ENCODE measurements at regions of chr3 and their contacts with region 1.

Region 1: DNA sequence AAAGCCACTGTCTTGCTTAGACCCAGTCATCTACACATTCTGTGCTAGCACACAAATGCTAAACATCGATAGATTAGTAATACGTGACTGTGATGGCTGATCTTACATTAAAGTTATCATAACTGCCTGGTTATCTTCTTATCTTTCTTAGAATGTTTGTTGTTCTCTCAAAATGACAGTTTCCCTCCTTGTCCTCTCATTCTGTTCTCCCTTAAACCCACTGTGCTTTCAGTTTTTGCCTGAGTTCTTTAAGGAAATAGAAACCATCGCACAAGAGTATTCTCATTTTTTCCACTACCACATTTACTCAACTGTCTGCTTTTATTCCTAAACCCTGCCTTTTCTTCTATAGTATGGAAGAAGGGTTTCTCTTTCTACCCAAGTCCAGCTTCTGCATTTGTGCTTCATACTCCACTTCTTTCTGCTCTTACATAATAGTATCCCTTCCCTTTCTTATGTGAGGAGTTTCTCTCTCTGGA is 17.1 kb downstream of the STX19 start:
- DNase-seq: no peak
- H3K4me3 Mint-ChIP-seq: no peak overlapping the region
- H3K27ac Mint-ChIP-seq: peak overlapping the region; percentile 36
- H3K4me1 Mint-ChIP-seq: peaks cover 35% of the 10 kb centered on the region
- H3K27me3 Mint-ChIP-seq: no peaks in the 10 kb centered on the region

Region 2: DNA sequence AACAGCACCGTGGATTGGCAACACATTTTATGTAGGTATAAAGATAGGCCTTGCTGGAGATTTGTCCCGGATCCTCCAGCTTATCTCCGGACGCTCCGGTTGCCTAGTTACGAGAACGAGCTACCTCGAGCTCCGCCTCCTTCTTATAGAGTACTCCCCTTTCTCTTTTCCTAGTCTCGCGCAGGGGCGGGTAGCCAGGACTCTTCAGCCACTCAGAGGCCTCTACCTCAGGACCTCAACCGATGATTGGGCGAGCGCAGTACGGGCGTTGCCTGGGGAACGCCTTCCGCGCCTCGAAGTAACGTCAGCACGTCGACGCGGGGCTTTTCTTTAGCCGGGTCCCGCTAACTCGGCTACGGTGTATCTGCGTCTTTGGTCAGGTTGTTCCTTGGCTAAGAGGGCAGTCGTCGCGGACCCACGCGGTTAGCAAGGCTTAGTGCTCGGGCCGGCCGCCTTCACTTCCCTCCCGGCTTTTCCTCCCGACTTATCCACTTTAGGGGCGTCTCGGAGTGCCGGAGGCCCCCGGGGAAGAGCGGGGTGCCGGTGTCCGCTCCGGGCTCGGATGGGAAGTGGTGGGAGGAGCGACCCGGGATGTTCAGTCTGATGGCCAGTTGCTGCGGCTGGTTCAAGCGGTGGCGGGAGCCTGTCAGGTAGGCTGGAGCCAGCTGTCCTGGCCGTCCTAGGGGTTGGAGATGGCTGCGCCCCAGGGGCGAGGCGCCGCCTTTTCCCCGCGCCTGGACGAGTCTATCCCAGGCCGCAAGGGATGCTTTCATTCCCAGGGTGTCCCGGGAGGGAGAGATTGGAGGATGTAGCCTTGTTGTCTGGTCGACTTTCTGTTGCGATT is 31.2 kb before region 1 on chr3 and contains the start of gene ARL13B:
- CTCF ChIA-PET with region 1: interaction called, 3 read pairs
- intact Hi-C with region 1: loop called (anchors 1 kb)
- DNase-seq: peak; percentile 96
- H3K4me3 Mint-ChIP-seq: peak within 1 kb of the TSS; percentile 81
- H3K27ac Mint-ChIP-seq: no peak within 1 kb of the TSS
- H3K4me1 Mint-ChIP-seq: peaks cover 12% of the 10 kb centered on the region
- H3K27me3 Mint-ChIP-seq: no peaks in the 10 kb centered on the region
- total RNA-seq, gene ARL13B: 8.0 to 8.3 TPM

Region 3: GRCh38 chr3:94036909-94037507 is 25.7 kb after region 1 on chr3:
- CTCF ChIA-PET with region 1: interaction called, 4 read pairs
- intact Hi-C with region 1: loop called (anchors 2 kb)
- DNase-seq: no peak
- H3K4me3 Mint-ChIP-seq: no peak overlapping the region
- H3K27ac Mint-ChIP-seq: no peak overlapping the region
- H3K4me1 Mint-ChIP-seq: no peaks in the 10 kb centered on the region
- H3K27me3 Mint-ChIP-seq: no peaks in the 10 kb centered on the region

Region 4: DNA sequence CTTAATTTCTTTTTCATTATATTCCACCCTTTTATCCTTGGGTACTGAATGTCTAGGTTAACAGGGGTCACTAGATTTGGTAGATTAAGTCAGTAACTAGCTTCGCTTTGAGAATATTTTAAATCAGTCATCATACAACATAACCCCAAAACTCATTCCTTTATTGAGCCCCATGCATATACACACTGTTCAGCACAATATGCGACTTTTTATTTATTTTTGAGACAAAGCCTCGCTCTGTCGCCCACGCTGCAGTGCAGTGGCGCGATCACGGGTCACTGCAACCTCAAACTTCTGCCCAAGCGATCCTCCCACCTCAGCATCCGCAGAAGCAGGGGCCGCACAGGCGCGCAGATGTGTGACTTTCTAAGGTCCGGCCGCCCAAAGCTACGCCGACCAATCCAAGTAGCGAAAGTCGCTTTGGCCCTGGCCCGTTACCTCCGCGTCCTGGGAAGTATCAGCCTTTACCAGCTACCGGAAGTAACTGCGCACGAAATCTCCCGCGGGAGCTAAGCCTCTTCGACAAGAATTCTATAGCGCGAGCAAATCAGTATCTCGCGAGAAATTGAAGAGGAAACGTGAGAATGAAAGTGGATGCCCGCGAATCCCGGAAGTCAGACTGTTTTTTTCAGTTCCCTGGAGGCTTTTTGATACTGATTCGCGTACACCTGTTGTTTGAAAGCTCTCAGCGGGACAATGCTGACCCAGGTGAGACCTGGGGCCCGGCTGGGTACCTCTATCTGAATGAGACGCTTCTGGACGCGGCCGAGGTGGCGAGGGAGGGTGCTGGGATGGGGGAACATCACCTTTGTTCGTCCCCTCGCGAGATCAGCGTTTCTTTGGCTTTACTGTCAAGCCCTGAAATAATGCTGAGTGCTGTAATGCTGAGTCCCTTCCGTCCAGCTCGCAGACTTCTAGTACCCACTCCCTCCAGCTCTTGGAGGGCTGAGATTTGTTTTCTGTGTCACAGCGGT is 51.4 kb after region 1 on chr3 and contains the starts of genes DHFR2 and NSUN3:
- CTCF ChIA-PET with region 1: interaction called, 6 read pairs
- intact Hi-C with region 1: loop called (anchors 1 kb)
- DNase-seq: peak; percentile 88
- H3K4me3 Mint-ChIP-seq: peak within 1 kb of the TSS; percentile 95
- H3K27ac Mint-ChIP-seq: peak within 1 kb of the TSS; percentile 99
- H3K4me1 Mint-ChIP-seq: peaks cover 59% of the 10 kb centered on the region
- H3K27me3 Mint-ChIP-seq: no peaks in the 10 kb centered on the region
- total RNA-seq, gene DHFR2: 4.5 to 5.3 TPM
- total RNA-seq, gene NSUN3: 10.9 to 15.8 TPM

Region 5: GRCh38 chr3:94069194-94069813 is 58.0 kb after region 1 on chr3:
- CTCF ChIA-PET with region 1: interaction called, 12 read pairs
- intact Hi-C with region 1: loop called (anchors 1 kb)
- DNase-seq: no peak
- H3K4me3 Mint-ChIP-seq: no peak overlapping the region
- H3K27ac Mint-ChIP-seq: no peak overlapping the region
- H3K4me1 Mint-ChIP-seq: peaks cover 76% of the 10 kb centered on the region
- H3K27me3 Mint-ChIP-seq: no peaks in the 10 kb centered on the region